ENCODE measurements at regions of chr7 and their contacts with region 1.

Region 1: GRCh38 chr7:108181073-108181985 is 51.2 kb upstream of the LAMB4 start:
- H3K4me3 ChIP-seq: no peak overlapping the region
- H3K27ac ChIP-seq: no peak overlapping the region
- H3K4me1 ChIP-seq: no peaks in the 10 kb centered on the region
- CTCF ChIP-seq: peak; percentile 45; the same call in 1 of the 2 replicates

Region 2: GRCh38 chr7:107441581-107442422 is 739.5 kb before region 1 on chr7:
- CTCF ChIA-PET with region 1: no interaction called
- POLR2A ChIA-PET with region 1: no interaction called
- H3K4me3 ChIP-seq: no peak overlapping the region
- H3K27ac ChIP-seq: no peak overlapping the region
- H3K4me1 ChIP-seq: no peaks in the 10 kb centered on the region
- CTCF ChIP-seq: no peak

Region 3: GRCh38 chr7:108002726-108003598 is 178.4 kb before region 1 on chr7 and contains the start of gene LAMB1:
- CTCF ChIA-PET with region 1: no interaction called
- POLR2A ChIA-PET with region 1: no interaction called
- H3K4me3 ChIP-seq: peak within 1 kb of the TSS; percentile 60
- H3K27ac ChIP-seq: peak within 1 kb of the TSS; percentile 70
- H3K4me1 ChIP-seq: peaks cover 6% of the 10 kb centered on the region
- CTCF ChIP-seq: no peak

Region 4: GRCh38 chr7:108459931-108460551 is 278.7 kb after region 1 on chr7:
- CTCF ChIA-PET with region 1: interaction called, 18 read pairs
- POLR2A ChIA-PET with region 1: no interaction called
- H3K4me3 ChIP-seq: no peak overlapping the region
- H3K27ac ChIP-seq: no peak overlapping the region
- H3K4me1 ChIP-seq: no peaks in the 10 kb centered on the region; the same call in 1 of the 2 replicates
- CTCF ChIP-seq: no peak; the same call in 1 of the 2 replicates

Measured in HEK293 (cell line).